ENCODE measurements at regions of chr6 and their contacts with region 1.

Region 1: GRCh38 chr6:42771741-42772100 is 10.1 kb upstream of the BICRAL start:
- DNase-seq: peak; percentile 51
- H3K4me3 ChIP-seq: peak overlapping the region; percentile 67
- H3K27ac ChIP-seq: peak overlapping the region; percentile 96
- H3K4me1 ChIP-seq: peaks cover 72% of the 10 kb centered on the region
- CTCF ChIP-seq: no peak

Region 2: GRCh38 chr6:42390228-42390934 is 381.3 kb before region 1 on chr6:
- CTCF ChIA-PET with region 1: no interaction called
- POLR2A ChIA-PET with region 1: no interaction called
- intact Hi-C with region 1: no loop called
- DNase-seq: peak; percentile 21
- H3K4me3 ChIP-seq: peak overlapping the region; percentile 21
- H3K27ac ChIP-seq: no peak overlapping the region
- H3K4me1 ChIP-seq: peaks cover 20% of the 10 kb centered on the region
- CTCF ChIP-seq: no peak

Region 3: DNA sequence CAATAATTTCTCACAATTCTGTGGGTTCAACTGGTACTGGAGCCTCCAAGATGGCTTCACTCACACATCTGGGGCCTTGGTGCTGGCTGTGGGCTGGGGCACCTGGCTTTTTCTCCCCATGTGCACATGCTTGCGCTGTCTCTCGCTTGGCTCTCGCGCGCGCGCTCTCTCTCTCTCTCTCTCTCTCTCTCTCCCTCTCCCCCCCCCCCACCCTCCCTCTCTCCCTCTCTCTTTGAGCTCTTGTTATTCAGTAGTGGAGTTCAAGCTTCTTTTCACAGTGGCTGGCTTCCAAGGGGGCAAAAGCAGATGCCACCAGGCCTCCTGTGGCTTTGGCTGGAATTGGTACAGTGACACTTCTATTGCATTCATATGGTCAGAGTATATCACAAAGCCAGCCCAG is 15.0 kb before region 1 on chr6:
- CTCF ChIA-PET with region 1: interaction called, 3 read pairs
- POLR2A ChIA-PET with region 1: interaction called, 494 read pairs
- intact Hi-C with region 1: no loop called
- DNase-seq: no peak
- H3K4me3 ChIP-seq: no peak overlapping the region
- H3K27ac ChIP-seq: no peak overlapping the region
- H3K4me1 ChIP-seq: peaks cover 14% of the 10 kb centered on the region
- CTCF ChIP-seq: no peak

Region 4: GRCh38 chr6:42782622-42783176 is 11.0 kb after region 1 on chr6:
- CTCF ChIA-PET with region 1: no interaction called
- POLR2A ChIA-PET with region 1: interaction called, 67 read pairs
- intact Hi-C with region 1: loop called (anchors 1 kb)
- DNase-seq: peak; percentile 74
- H3K4me3 ChIP-seq: peak overlapping the region; percentile 75
- H3K27ac ChIP-seq: peak overlapping the region; percentile 92
- H3K4me1 ChIP-seq: peaks cover 69% of the 10 kb centered on the region
- CTCF ChIP-seq: no peak